ENCODE measurements at regions of chr4 and their contacts with region 1.

Region 1: GRCh38 chr4:54961357-54961975 is 163.9 kb downstream of the KDR start:
- DNase-seq: peak; percentile 54
- H3K4me3 Mint-ChIP-seq: no peak overlapping the region
- H3K27ac Mint-ChIP-seq: no peak overlapping the region
- H3K4me1 Mint-ChIP-seq: no peaks in the 10 kb centered on the region
- H3K27me3 Mint-ChIP-seq: peaks cover 24% of the 10 kb centered on the region
- CTCF ChIP-seq: peak; percentile 54

Region 2: GRCh38 chr4:53459548-53459947 is 1501.9 kb before region 1 on chr4:
- CTCF ChIA-PET with region 1: no interaction called
- POLR2A ChIA-PET with region 1: no interaction called
- intact Hi-C with region 1: no loop called
- DNase-seq: peak; percentile 5
- H3K4me3 Mint-ChIP-seq: no peak overlapping the region
- H3K27ac Mint-ChIP-seq: no peak overlapping the region
- H3K4me1 Mint-ChIP-seq: peaks cover 6% of the 10 kb centered on the region
- H3K27me3 Mint-ChIP-seq: no peaks in the 10 kb centered on the region
- CTCF ChIP-seq: no peak

Region 3: DNA sequence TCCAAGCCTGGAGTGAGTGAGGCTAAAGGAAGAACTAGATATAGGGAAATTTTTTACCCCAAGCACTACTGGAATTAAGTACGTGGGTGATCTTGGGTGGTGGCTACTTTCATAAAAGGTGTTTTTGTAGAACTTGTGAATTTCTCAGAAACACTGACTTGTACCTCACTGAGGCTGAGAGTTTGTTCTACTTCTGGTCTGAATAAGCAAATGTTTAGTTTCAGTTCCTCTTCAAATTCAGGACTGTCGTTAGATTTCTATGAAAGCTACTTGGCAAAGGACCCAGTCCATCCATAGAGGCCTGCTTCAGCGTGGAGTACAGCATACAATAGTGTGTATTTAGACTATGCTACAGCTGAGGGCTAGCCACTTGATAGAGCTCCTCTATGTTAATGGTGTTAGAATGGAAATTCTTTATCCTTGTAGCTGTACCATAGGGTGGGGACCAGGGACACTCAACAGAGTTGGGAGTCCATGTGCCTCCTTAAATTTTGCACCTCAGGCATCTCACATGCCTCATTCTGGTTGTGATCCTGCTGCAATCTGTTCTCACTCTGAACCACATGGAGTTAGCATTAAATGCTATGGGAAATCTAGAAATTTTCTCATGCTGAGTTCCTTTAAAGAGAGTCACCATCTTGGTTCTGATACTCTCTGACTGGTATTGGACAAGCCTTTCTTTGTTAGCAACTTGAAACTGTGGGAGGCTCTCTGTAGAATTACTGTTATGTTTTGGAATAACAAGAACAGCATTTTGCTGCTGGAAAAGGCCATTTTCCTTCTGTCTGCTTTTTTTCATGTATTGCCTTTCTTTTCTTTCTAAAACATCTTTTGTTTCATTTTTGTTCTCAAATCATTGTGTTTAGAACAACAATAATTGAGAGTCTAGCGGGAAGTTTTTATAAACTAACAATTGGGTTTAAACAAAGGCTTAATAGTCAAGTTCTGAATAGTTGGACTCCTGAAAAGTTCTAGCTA is 645.6 kb before region 1 on chr4:
- CTCF ChIA-PET with region 1: interaction called, 28 read pairs
- POLR2A ChIA-PET with region 1: no interaction called
- intact Hi-C with region 1: no loop called
- DNase-seq: no peak
- H3K4me3 Mint-ChIP-seq: no peak overlapping the region
- H3K27ac Mint-ChIP-seq: no peak overlapping the region
- H3K4me1 Mint-ChIP-seq: no peaks in the 10 kb centered on the region
- H3K27me3 Mint-ChIP-seq: peaks cover 40% of the 10 kb centered on the region
- CTCF ChIP-seq: no peak

Region 4: GRCh38 chr4:54384563-54384962 is 576.9 kb before region 1 on chr4:
- CTCF ChIA-PET with region 1: interaction called, 10 read pairs
- POLR2A ChIA-PET with region 1: no interaction called
- intact Hi-C with region 1: no loop called
- DNase-seq: peak; percentile 47
- H3K4me3 Mint-ChIP-seq: no peak overlapping the region
- H3K27ac Mint-ChIP-seq: no peak overlapping the region
- H3K4me1 Mint-ChIP-seq: peaks cover 4% of the 10 kb centered on the region
- H3K27me3 Mint-ChIP-seq: no peaks in the 10 kb centered on the region
- CTCF ChIP-seq: peak; percentile 44

Region 5: DNA sequence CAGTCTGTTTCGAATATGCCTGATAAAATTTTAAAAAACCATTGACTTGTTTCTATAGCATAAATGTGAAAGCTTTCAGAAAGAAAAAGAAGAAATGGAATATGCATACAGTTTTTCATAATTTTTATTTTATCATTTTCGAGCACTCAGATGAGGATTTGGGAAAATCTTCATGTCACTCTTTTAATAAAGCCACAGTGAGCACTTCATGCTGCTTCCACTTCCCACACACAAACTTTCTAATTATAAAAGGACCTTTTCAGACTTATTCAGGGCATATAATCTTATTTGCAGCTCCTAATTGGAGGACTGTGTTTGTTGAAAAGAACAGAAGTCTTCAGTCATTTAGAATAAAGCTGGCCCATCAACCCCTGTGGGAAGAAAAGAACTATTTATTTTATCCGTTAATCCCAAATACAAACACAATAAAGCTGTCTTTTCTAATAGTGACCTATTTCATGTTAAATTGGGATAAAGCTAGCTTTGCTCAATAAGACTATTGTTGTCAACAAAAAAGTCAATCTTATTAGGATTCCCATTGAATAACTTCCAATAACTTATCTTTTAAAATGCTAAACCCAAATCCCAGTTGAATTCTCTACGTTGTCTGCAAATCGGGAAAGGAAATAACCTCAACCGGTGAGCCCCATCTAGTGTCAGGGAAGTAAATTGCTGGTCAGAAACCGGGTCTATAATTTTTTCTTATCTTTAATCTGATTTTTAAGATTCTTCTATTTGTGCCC is 520.9 kb before region 1 on chr4:
- CTCF ChIA-PET with region 1: no interaction called
- POLR2A ChIA-PET with region 1: no interaction called
- intact Hi-C with region 1: loop called (anchors 2 kb)
- DNase-seq: peak; percentile 49
- H3K4me3 Mint-ChIP-seq: no peak overlapping the region
- H3K27ac Mint-ChIP-seq: no peak overlapping the region
- H3K4me1 Mint-ChIP-seq: no peaks in the 10 kb centered on the region
- H3K27me3 Mint-ChIP-seq: peaks cover 2% of the 10 kb centered on the region
- CTCF ChIP-seq: peak; percentile 49

Region 6: GRCh38 chr4:54683616-54684346 is 277.7 kb before region 1 on chr4:
- CTCF ChIA-PET with region 1: interaction called, 23 read pairs
- POLR2A ChIA-PET with region 1: no interaction called
- intact Hi-C with region 1: loop called (anchors 1 kb)
- DNase-seq: peak; percentile 72
- H3K4me3 Mint-ChIP-seq: no peak overlapping the region
- H3K27ac Mint-ChIP-seq: no peak overlapping the region
- H3K4me1 Mint-ChIP-seq: peaks cover 5% of the 10 kb centered on the region
- H3K27me3 Mint-ChIP-seq: no peaks in the 10 kb centered on the region
- CTCF ChIP-seq: no peak

Region 7: GRCh38 chr4:54945838-54946237 is 15.6 kb before region 1 on chr4:
- CTCF ChIA-PET with region 1: interaction called, 23 read pairs
- POLR2A ChIA-PET with region 1: no interaction called
- intact Hi-C with region 1: no loop called
- DNase-seq: no peak
- H3K4me3 Mint-ChIP-seq: no peak overlapping the region
- H3K27ac Mint-ChIP-seq: no peak overlapping the region
- H3K4me1 Mint-ChIP-seq: no peaks in the 10 kb centered on the region
- H3K27me3 Mint-ChIP-seq: no peaks in the 10 kb centered on the region
- CTCF ChIP-seq: no peak